Aorta (tissue), 5 donors: ENCODE measurements at regions of chr11 and their contacts with region 1.

Region 1: GRCh38 chr11:113305440-113306336 is 8.7 kb upstream of the TTC12 start:
- DNase-seq: peak; percentile 85 to 93
- ATAC-seq: peak; percentile 89
- H3K4me3 ChIP-seq: no peak overlapping the region
- H3K27ac ChIP-seq: no peak overlapping the region
- H3K4me1 ChIP-seq: no peaks in the 10 kb centered on the region
- H3K27me3 ChIP-seq: no peaks in the 10 kb centered on the region

Region 2: DNA sequence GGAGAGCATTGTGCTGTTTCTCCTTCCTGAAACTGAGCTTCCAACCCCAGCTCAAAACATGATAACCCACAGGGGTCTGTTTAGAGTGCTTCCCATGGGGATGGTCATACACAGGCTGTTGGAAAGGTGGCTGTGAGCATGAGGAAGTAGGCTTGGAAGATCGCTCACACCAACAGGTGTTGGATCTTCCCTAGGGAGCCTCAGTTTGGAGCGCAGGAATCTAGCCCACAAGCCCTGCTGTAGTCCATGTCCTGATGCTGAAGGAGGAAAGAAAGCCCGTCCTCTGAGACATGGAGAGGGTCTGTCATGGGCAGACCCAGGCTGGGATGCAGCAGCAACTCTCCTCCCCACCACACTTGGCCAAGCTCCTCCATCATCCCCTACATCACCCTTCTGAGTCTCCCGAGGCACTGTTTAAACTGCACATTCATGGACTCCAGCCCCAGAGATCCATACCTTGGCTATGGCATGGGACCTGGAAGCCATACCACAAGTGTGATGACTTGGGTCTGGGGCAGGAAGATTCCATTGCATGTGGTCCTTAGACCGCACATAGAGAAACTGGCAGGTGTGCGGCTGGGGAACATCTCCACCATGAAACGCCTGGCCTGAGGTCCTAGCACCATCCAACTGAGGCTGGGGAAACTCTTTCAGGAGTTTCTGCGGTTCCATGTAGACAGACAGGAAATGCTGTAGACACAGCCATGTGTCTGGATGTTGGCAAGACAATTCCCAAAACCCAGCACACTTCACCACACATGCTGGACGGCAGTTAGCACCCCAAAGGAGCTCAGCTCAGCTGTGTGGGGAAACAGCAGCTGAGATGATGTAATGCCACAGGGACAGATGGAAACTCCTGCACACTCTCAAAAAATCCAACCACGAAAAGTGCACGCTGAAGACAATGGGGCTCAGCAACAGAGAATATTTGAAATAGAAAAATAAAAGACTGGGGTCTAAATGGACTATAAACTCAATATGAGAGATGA is 18.9 kb before region 1 on chr11:
- intact Hi-C with region 1: no loop called
- DNase-seq: no peak
- ATAC-seq: no peak
- H3K4me3 ChIP-seq: no peak overlapping the region
- H3K27ac ChIP-seq: no peak overlapping the region
- H3K4me1 ChIP-seq: no peaks in the 10 kb centered on the region
- H3K27me3 ChIP-seq: no peaks in the 10 kb centered on the region

Region 3: GRCh38 chr11:113730887-113731726 is 425.4 kb after region 1 on chr11:
- intact Hi-C with region 1: loop called (anchors 1 to 2 kb)
- DNase-seq: no peak
- ATAC-seq: no peak
- H3K4me3 ChIP-seq: no peak overlapping the region
- H3K27ac ChIP-seq: no peak overlapping the region
- H3K4me1 ChIP-seq: peaks cover 0 to 2% of the 10 kb centered on the region in 2 donors
- H3K27me3 ChIP-seq: no peaks in the 10 kb centered on the region

Region 4: GRCh38 chr11:113796663-113797259 is 491.1 kb after region 1 on chr11:
- intact Hi-C with region 1: loop called (anchors 5 kb)
- DNase-seq: no peak
- ATAC-seq: peak; percentile 83
- H3K4me3 ChIP-seq: no peak overlapping the region
- H3K27ac ChIP-seq: no peak overlapping the region
- H3K4me1 ChIP-seq: no peaks in the 10 kb centered on the region
- H3K27me3 ChIP-seq: no peaks in the 10 kb centered on the region